ENCODE measurements at regions of chr18 and their contacts with region 1.

Region 1: DNA sequence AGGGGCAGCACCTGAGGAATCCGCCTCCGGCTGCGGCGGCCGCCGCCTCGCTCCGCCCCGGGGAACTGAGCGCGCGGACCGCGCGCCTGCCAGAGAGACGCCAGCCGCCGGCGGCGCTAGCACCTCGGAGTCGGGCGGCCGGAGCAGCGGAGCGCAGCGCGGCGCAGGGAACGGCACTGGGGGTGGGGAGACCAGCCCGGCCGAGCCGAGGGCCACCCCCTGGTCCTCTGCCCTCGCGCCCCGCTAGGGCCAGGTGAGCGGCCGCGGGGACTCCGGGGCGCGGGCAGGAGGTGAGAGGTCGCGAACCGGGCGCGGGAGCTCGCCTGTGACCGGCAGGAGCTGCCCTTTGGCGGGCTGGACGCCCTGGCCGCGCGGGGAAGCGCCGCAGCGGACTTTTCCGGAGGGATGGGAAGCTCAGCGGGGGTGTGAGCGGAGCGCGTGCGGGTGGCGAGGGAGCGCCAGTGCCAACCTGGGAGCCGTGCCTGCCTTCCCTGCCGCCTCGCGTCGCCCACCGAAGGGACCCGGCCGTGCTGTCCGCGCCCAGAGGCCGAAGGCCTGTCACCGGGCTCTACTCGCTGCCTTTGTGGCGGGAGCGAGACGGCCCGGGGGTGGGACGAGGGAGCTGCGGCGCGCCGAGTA is at the start of gene GREB1L:
- DNase-seq: no peak
- ATAC-seq: peak; percentile 97
- total RNA-seq, gene GREB1L: 6.4 TPM

Region 2: GRCh38 chr18:21444465-21445023 is 202.3 kb after region 1 on chr18:
- intact Hi-C with region 1: loop called (anchors 1 kb)
- DNase-seq: no peak
- ATAC-seq: peak; percentile 50

Region 3: DNA sequence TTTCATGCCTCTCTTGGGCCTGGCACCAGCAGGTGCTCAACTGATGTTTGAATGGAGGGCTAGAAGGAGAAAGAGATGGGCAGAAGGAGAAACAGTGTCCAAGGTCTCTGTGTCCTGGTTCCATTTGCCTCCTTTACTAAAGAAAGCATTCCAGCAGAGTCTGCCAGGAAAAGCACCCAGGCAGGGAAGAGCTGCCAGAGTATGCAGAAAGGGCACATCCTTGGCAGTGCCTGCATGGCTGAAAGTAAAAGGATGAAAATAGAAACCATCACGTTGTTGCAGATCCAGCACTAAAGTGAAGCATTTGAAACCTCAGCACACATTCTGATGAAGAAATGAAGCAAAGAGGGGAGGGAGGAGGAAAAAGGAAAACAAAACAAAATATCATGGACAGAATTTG is 216.1 kb after region 1 on chr18:
- intact Hi-C with region 1: loop called (anchors 5 kb)
- DNase-seq: no peak
- ATAC-seq: peak; percentile 88